ENCODE measurements at regions of chr11 and their contacts with region 1.

Region 1: GRCh38 chr11:59770319-59770718 is 15.1 kb downstream of the STX3 start:
- DNase-seq: no peak
- ATAC-seq: no peak
- H3K4me3 ChIP-seq: no peak overlapping the region
- H3K27ac ChIP-seq: no peak overlapping the region
- H3K4me1 ChIP-seq: peaks cover 5% of the 10 kb centered on the region
- H3K27me3 ChIP-seq: no peaks in the 10 kb centered on the region; a peak in 1 of 4 replicates
- CTCF ChIP-seq: no peak
- EP300 ChIP-seq: no peak
- POLR2A ChIP-seq: no peak
- RAD21 ChIP-seq: no peak

Region 2: DNA sequence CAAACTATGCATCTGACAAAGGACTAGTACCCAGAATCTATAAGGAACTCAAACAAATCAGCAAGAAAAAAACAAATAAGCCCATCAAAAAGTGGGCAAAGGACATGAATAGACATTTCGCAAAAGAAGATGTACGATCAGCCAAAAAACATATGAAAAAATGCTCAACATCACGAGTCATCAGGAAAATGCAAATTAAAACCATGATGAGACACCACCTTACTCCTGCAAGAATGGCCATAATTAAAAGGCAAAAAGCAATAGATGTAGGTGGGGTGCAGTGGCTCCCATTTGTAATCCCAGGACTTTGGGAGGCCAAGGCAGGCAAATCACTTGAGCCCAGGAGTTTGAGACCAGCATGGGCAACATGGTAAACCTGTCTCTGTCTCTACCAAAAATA is 46.3 kb before region 1 on chr11:
- CTCF ChIA-PET with region 1: no interaction called
- POLR2A ChIA-PET with region 1: interaction called, 3 read pairs
- RAD21 ChIA-PET with region 1: no interaction called
- SMC1A ChIA-PET with region 1: no interaction called
- in situ Hi-C with region 1: loop called (anchors 5 kb)
- intact Hi-C with region 1: no loop called
- DNase-seq: no peak
- ATAC-seq: no peak
- H3K4me3 ChIP-seq: no peak overlapping the region
- H3K27ac ChIP-seq: no peak overlapping the region
- H3K4me1 ChIP-seq: no peaks in the 10 kb centered on the region
- H3K27me3 ChIP-seq: no peaks in the 10 kb centered on the region
- CTCF ChIP-seq: no peak
- EP300 ChIP-seq: no peak
- POLR2A ChIP-seq: no peak
- RAD21 ChIP-seq: no peak

Region 3: DNA sequence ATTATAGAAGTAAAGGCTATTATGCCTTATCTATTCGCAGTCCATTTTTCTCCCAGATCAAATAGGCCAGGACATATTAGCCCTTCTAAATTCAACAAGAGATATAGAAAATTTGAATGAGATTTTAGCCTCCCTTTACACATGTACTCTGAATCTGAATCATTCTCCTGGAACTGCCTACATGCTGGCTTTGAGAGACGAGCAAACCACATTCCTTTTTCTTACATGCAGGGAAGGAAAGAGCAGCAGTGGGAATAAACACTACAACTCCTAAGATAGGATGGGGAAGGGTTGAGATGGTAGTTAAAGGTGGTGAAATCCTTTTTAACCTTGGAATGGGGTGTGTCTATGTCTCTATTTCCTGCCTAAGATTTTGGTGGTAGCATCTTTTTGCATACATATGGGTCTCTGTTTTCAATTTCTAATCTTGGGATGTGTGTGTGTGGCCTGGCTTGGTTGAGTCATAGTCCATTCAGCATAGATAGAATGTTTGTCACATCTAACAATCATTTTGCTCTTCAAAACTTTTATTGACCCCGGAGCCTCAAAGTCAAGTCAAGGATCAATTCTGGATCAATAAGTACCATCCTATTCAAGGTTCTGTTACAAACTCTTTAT is 258.8 kb after region 1 on chr11:
- CTCF ChIA-PET with region 1: no interaction called
- POLR2A ChIA-PET with region 1: no interaction called
- RAD21 ChIA-PET with region 1: no interaction called
- SMC1A ChIA-PET with region 1: no interaction called
- in situ Hi-C with region 1: no loop called
- intact Hi-C with region 1: loop called (anchors 5 kb)
- DNase-seq: no peak
- ATAC-seq: no peak
- H3K4me3 ChIP-seq: no peak overlapping the region
- H3K27ac ChIP-seq: no peak overlapping the region
- H3K4me1 ChIP-seq: no peaks in the 10 kb centered on the region
- H3K27me3 ChIP-seq: no peaks in the 10 kb centered on the region
- CTCF ChIP-seq: no peak
- EP300 ChIP-seq: no peak
- POLR2A ChIP-seq: no peak
- RAD21 ChIP-seq: no peak

Measured in GM12878 (cell line).